ENCODE measurements at regions of chrX and their contacts with region 1.

Region 1: GRCh38 chrX:118418811-118419251 is 72.9 kb downstream of the WDR44 start:
- DNase-seq: no peak
- ATAC-seq: no peak
- H3K4me3 ChIP-seq: no peak overlapping the region
- H3K27ac ChIP-seq: no peak overlapping the region
- H3K4me1 ChIP-seq: no peaks in the 10 kb centered on the region
- H3K27me3 ChIP-seq: no peaks in the 10 kb centered on the region
- CTCF ChIP-seq: no peak

Region 2: GRCh38 chrX:116756958-116757357 is 1661.9 kb before region 1 on chrX:
- intact Hi-C with region 1: loop called in 1 of 2 experiments (anchors 5 kb)
- DNase-seq: no peak
- ATAC-seq: no peak
- H3K4me3 ChIP-seq: no peak overlapping the region
- H3K27ac ChIP-seq: no peak overlapping the region
- H3K4me1 ChIP-seq: no peaks in the 10 kb centered on the region
- H3K27me3 ChIP-seq: no peaks in the 10 kb centered on the region
- CTCF ChIP-seq: no peak

Region 3: DNA sequence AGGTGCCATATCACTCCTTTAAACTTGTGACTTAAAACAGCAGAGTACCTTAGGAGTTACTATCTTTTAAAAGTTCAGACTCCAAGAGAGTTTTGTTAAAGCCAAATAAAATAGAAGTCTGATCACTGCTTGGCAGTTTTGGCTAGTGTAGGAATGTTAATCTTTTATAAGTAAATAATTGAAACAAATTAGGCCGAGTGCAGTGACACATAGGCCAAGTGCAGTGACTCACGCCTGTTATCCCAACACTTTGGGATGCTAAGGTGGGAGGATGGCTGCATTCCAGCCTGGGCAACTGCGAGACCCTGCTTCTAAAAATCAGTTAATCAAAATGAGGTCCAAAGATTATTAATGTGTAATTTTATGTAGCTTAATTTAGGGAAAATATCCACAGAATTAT is 35.7 kb before region 1 on chrX:
- intact Hi-C with region 1: no loop called
- DNase-seq: no peak
- ATAC-seq: no peak
- H3K4me3 ChIP-seq: no peak overlapping the region
- H3K27ac ChIP-seq: no peak overlapping the region
- H3K4me1 ChIP-seq: no peaks in the 10 kb centered on the region
- H3K27me3 ChIP-seq: no peaks in the 10 kb centered on the region
- CTCF ChIP-seq: no peak